Activated CD4-positive, alpha-beta memory T cell treated with anti-CD3 and anti-CD28 coated beads, Interleukin-2, amount 10 ng/mL, durations not matched to agents 7 days and 5 days (primary cell): ENCODE measurements at regions of chr10 and their contacts with region 1.

Region 1: GRCh38 chr10:89327784-89328441 is at the start of gene IFIT3:
- DNase-seq: peak; percentile 32
- H3K4me3 Mint-ChIP-seq: peak within 1 kb of the TSS; percentile 81
- H3K27ac Mint-ChIP-seq: peak within 1 kb of the TSS; percentile 72
- H3K4me1 Mint-ChIP-seq: peaks cover 58% of the 10 kb centered on the region
- H3K27me3 Mint-ChIP-seq: peaks cover 13% of the 10 kb centered on the region
- total RNA-seq, gene IFIT3: 72.6 to 74.5 TPM

Region 2: GRCh38 chr10:89283936-89284475 is 43.9 kb before region 1 on chr10:
- CTCF ChIA-PET with region 1: no interaction called
- POLR2A ChIA-PET with region 1: no interaction called
- DNase-seq: no peak
- H3K4me3 Mint-ChIP-seq: no peak overlapping the region
- H3K27ac Mint-ChIP-seq: no peak overlapping the region
- H3K4me1 Mint-ChIP-seq: no peaks in the 10 kb centered on the region
- H3K27me3 Mint-ChIP-seq: peaks cover 19% of the 10 kb centered on the region

Region 3: DNA sequence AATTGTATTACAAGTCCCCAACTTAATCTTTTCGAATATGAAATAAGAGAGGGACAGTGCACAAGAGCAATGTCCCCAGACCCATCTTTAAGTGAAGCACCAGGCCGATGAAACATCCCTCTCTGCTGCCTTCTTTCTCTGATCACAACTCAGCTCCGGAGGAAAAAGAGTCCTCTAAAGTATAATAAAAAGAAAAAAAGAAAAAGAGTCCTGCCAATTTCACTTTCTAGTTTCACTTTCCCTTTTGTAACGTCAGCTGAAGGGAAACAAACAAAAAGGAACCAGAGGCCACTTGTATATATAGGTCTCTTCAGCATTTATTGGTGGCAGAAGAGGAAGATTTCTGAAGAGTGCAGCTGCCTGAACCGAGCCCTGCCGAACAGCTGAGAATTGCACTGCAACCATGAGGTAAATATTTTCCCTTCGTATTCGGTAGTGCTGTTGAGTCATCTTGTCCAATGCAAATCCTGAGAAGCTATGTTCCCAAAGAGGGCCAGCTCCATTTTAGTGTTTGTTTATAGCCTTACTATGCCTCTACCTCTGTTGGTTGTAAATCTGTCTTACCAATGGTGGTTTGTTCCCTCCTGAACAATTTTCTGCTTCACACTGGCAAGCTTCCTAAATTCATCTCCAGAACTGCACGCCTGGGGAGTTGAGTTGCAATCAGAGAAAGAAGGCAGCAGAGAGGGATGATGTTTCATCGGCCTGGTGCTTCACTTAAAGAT is 26.0 kb before region 1 on chr10 and contains the start of gene IFIT2:
- CTCF ChIA-PET with region 1: interaction called, 9 read pairs
- POLR2A ChIA-PET with region 1: interaction called, 12 read pairs
- DNase-seq: peak; percentile 33
- H3K4me3 Mint-ChIP-seq: peak within 1 kb of the TSS; percentile 82
- H3K27ac Mint-ChIP-seq: peak within 1 kb of the TSS; percentile 68
- H3K4me1 Mint-ChIP-seq: peaks cover 32% of the 10 kb centered on the region
- H3K27me3 Mint-ChIP-seq: peaks cover 31% of the 10 kb centered on the region
- total RNA-seq, gene IFIT2: 14.6 to 14.8 TPM

Region 4: GRCh38 chr10:89391917-89392756 is 64.2 kb after region 1 on chr10 and contains the start of gene IFIT1:
- CTCF ChIA-PET with region 1: interaction called, 9 read pairs
- POLR2A ChIA-PET with region 1: interaction called, 13 read pairs
- DNase-seq: peak; percentile 65
- H3K4me3 Mint-ChIP-seq: peak within 1 kb of the TSS; percentile 87
- H3K27ac Mint-ChIP-seq: peak within 1 kb of the TSS; percentile 90
- H3K4me1 Mint-ChIP-seq: peaks cover 43% of the 10 kb centered on the region
- H3K27me3 Mint-ChIP-seq: no peaks in the 10 kb centered on the region
- total RNA-seq, gene IFIT1: 69.8 to 71.6 TPM